Aorta (tissue), 5 donors: ENCODE measurements at regions of chr17 and their contacts with region 1.

Region 1: DNA sequence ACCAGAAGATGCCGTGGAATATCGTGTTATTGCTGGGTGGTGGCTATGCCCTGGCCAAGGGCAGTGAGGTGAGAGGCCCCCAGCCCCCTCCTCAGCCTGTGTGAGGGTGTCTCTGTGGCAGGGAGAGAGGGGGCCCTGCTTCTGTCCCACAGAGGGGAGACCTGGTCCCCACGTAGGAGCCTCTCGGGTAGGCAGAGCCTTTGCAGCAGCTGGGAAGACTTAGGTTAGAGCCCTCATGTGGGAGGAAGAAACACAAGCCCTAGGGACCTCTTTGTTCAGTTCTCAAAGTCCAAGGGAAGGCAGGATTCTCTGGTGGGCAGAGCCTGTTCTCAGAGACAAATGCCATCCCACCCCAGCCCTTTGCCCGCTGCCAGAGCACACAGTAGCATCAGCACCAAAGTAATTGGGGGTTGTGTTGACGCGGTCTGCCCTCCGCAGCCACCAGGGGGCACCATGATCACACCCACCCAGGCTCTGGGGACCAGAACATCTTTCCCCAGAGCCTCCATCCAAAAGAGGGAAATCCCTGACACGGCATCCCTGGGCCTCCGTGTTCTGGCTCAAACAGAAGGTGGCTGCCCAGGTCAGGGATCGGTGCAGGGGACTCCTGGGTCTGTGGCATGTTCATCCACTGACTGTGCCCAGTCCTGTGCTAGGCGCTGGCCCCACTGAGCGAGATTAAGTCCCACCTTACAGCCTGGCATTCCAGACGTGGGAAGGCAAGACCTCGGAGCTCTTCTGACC is 11.5 kb upstream of the FOXN1 start:
- DNase-seq: peak; percentile 82 to 90
- ATAC-seq: no peak
- H3K4me3 ChIP-seq: no peak overlapping the region
- H3K27ac ChIP-seq: no peak overlapping the region
- H3K4me1 ChIP-seq: no peaks in the 10 kb centered on the region
- H3K27me3 ChIP-seq: peaks cover 0 to 1% of the 10 kb centered on the region in 2 donors

Region 2: DNA sequence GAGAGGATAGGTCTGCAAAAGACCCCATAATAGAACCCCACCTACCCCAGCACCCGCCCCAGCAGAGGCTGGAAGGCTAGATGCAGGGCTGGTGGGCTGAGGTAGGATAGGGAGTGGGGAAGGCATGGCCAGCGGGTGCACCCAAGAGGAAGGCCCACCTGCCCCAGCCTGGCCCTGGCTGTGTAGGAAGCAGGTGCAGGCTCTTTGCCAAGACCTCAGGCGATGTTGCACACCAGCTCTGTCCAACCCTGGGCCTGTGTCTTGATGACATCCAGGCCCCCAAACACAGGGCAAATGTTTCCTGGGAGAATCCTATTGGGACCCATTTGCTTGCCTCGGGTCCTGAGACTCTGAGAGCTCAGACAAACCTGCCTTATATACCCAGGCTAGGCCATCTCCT is 45.6 kb after region 1 on chr17:
- intact Hi-C with region 1: loop called (anchors 1 to 2 kb)
- DNase-seq: peak in 1 of 2 donors; percentile 71
- ATAC-seq: no peak
- H3K4me3 ChIP-seq: no peak overlapping the region
- H3K27ac ChIP-seq: no peak overlapping the region
- H3K4me1 ChIP-seq: no peaks in the 10 kb centered on the region
- H3K27me3 ChIP-seq: no peaks in the 10 kb centered on the region

Region 3: DNA sequence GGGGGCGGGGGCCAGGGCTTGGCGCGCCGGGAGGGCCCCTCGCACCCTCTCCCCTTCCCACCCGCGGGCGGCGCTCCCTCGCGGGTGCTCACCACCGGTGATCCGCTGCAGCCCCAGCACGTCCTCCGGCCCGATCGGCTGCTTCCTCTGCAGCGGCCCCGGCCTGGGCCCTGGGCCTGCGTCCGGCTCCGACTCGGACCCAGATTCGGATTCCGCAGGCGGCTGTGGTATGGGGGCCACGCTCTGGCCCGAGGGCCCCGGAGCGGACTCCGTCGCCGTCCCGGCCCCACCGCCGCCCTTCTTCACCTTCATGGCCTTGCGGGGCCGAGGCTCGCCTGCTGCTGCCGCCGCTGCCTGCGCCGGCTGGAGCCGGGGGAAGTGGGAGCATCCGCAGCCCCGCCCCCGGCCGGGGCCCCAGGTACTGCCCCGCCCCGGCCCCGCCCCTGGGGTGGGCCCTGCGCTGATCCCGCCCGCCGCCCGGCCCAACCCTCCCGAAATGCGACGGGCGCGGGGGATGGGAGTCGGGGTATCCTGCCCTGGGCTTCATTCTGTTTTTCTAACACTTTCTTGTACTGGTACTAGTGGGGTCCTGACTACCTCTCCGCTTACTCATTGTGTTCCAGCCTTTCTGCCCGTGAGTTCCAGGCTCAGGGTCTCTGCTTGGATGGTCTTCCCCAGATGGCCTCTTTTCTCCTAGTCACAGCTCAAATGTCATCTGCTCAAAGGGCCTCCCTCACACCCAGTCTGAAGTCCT is 57.8 kb after region 1 on chr17 and contains the start of gene UNC119:
- intact Hi-C with region 1: no loop called
- DNase-seq: peak; percentile 80 to 93
- ATAC-seq: peak; percentile 91
- H3K4me3 ChIP-seq: peak within 1 kb of the TSS; percentile 71 to 86
- H3K27ac ChIP-seq: peak within 1 kb of the TSS in 1 of 2 donors; percentile 29
- H3K4me1 ChIP-seq: no peaks in the 10 kb centered on the region
- H3K27me3 ChIP-seq: no peaks in the 10 kb centered on the region
- total RNA-seq, gene UNC119: 17.4 to 25.7 TPM